MCF 10A (cell line): ENCODE measurements at regions of chr7 and their contacts with region 1.

Region 1: DNA sequence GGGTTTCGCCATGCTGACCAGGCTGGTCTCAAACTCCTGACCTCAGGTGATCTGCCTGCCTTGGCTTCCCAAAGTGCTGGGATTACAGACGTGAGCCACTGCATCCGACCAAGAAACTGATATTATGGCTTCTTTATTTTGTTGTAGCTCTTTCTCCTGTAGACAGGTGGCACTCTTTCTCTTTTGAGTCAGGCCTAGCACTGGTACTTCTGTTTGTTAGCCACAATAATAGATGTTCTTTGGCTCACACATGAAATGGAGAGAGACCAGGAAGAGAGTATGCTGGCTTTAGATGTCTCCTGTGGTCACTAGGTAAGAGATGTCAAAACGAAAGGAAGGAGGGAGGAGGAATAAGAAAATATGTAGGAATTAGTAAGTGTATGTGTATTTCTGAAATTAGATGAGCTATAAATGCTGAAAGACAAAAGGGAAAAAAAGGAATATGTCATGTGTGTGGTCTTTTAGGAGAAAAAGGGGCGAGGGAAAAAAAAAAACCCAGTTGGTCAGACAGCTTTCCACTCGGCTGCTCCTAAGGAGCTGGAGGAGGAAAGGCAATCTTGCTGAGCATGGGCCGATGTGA is 78.7 kb downstream of the CLEC2L start:
- DNase-seq: peak; percentile 36
- H3K4me3 Mint-ChIP-seq: no peak overlapping the region
- H3K27ac Mint-ChIP-seq: no peak overlapping the region
- H3K4me1 Mint-ChIP-seq: no peaks in the 10 kb centered on the region
- H3K27me3 Mint-ChIP-seq: no peaks in the 10 kb centered on the region
- CTCF ChIP-seq: peak; percentile 44

Region 2: GRCh38 chr7:139505563-139505962 is 96.7 kb before region 1 on chr7:
- CTCF ChIA-PET with region 1: interaction called, 13 read pairs
- POLR2A ChIA-PET with region 1: no interaction called
- intact Hi-C with region 1: no loop called
- DNase-seq: peak; percentile 39
- H3K4me3 Mint-ChIP-seq: no peak overlapping the region
- H3K27ac Mint-ChIP-seq: no peak overlapping the region
- H3K4me1 Mint-ChIP-seq: no peaks in the 10 kb centered on the region
- H3K27me3 Mint-ChIP-seq: no peaks in the 10 kb centered on the region
- CTCF ChIP-seq: no peak

Region 3: DNA sequence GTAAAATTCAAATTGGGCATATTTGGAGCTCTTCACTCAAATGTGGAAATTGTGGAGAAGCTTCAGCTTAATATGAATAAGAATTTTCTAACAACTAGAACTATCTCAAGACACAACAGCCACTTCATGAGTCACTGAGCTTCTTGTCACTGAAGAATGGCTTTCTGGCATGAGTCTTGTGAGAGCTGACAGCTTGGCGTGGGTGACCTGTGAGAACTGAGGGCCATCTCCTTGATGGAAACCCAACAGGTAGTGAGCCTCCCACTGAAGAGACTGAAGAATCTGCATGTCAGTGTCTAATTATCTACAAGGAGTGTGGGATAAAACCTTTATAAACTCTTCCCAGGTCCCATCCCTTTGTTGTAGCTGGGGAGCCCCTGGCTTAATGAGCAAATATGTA is 12.8 kb before region 1 on chr7:
- CTCF ChIA-PET with region 1: interaction called, 14 read pairs
- POLR2A ChIA-PET with region 1: no interaction called
- intact Hi-C with region 1: no loop called
- DNase-seq: no peak
- H3K4me3 Mint-ChIP-seq: no peak overlapping the region
- H3K27ac Mint-ChIP-seq: peak overlapping the region; percentile 46
- H3K4me1 Mint-ChIP-seq: peaks cover 6% of the 10 kb centered on the region
- H3K27me3 Mint-ChIP-seq: no peaks in the 10 kb centered on the region
- CTCF ChIP-seq: no peak

Region 4: GRCh38 chr7:139613971-139614411 is 11.8 kb after region 1 on chr7:
- CTCF ChIA-PET with region 1: interaction called, 15 read pairs
- POLR2A ChIA-PET with region 1: interaction called, 3 read pairs
- intact Hi-C with region 1: no loop called
- DNase-seq: no peak
- H3K4me3 Mint-ChIP-seq: no peak overlapping the region
- H3K27ac Mint-ChIP-seq: no peak overlapping the region
- H3K4me1 Mint-ChIP-seq: peaks cover 3% of the 10 kb centered on the region
- H3K27me3 Mint-ChIP-seq: no peaks in the 10 kb centered on the region
- CTCF ChIP-seq: no peak

Region 5: DNA sequence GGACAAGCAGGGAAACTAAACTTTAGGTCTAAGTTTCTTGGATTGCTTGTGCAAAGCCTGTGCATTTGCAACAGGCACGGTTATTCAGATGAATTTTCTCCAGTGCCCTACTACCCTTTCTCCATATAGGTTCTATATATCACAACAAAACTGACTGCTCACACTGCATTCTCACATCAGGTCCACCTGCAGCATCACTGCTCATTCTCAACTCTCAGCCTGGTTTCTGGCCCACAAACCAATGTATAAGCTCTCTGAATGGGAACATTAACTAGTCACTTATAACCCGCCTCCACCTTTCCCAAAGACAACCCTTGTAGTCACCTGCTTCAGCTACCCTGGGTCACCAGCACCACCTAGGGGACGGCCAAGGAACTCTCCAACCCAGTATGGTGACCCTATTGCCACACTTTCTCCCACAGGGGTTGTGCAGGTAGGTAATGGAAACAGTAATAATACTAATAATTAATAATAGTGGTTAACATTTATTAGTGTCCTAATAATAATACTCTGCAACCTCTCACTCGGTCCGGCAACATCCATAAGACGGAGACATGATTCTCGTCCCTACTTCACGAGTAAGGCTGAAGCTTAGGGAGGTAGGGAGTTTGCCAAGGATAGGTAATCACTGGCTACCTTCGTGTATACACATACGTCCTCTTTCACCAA is 18.6 kb after region 1 on chr7:
- CTCF ChIA-PET with region 1: interaction called, 15 read pairs
- POLR2A ChIA-PET with region 1: interaction called, 3 read pairs
- intact Hi-C with region 1: no loop called
- DNase-seq: peak; percentile 39
- H3K4me3 Mint-ChIP-seq: no peak overlapping the region
- H3K27ac Mint-ChIP-seq: no peak overlapping the region
- H3K4me1 Mint-ChIP-seq: peaks cover 10% of the 10 kb centered on the region
- H3K27me3 Mint-ChIP-seq: no peaks in the 10 kb centered on the region
- CTCF ChIP-seq: peak; percentile 73

Region 6: DNA sequence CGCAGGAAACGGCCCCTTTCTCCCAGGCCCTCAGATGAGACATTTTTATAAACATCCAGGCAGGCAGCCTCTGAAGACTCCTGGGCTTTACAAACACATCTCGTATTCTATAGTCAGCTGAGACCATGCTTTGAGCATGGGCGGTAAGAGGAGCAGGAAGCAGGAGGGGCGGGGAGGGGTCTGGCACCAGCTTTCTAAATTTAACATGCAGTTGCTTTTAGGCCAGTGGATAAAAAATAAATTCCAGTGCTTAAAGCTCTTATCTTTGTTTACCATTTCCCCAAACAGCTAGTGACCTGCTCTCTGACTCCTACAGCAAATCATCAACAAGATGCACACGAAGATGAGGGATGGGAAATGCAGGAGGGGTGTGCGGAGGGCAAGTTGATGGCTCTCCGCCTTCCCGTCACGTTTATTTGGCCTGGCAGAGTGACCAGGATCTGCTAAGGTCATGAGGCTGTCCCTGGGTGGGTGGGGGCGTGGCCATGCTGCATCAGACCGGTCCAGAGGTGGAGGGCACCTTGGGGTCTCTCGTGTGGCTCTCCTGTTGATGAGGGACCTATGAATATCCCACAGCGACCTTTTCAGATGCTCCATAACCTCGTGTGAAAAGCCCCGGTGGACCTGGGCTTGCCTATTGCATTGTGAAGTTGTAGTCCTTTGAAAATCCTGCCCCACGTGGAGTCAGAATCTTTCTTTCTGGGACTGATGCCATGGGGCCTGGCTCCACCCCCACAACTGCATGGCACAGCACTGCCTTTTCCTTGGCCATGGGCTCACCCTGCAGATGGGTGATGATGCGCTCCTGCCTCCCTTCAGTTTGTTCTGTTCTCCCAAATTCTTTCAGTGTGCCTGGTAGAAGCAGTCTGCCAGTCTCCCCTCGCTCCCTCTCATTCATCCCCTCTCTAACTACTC is 393.0 kb after region 1 on chr7:
- CTCF ChIA-PET with region 1: interaction called, 32 read pairs
- POLR2A ChIA-PET with region 1: no interaction called
- intact Hi-C with region 1: no loop called
- DNase-seq: peak; percentile 73
- H3K4me3 Mint-ChIP-seq: no peak overlapping the region
- H3K27ac Mint-ChIP-seq: no peak overlapping the region
- H3K4me1 Mint-ChIP-seq: peaks cover 12% of the 10 kb centered on the region
- H3K27me3 Mint-ChIP-seq: no peaks in the 10 kb centered on the region
- CTCF ChIP-seq: no peak

Region 7: GRCh38 chr7:140003913-140004382 is 401.7 kb after region 1 on chr7:
- CTCF ChIA-PET with region 1: interaction called, 32 read pairs
- POLR2A ChIA-PET with region 1: no interaction called
- intact Hi-C with region 1: loop called (anchors 1 kb)
- DNase-seq: peak; percentile 80
- H3K4me3 Mint-ChIP-seq: no peak overlapping the region
- H3K27ac Mint-ChIP-seq: no peak overlapping the region
- H3K4me1 Mint-ChIP-seq: no peaks in the 10 kb centered on the region
- H3K27me3 Mint-ChIP-seq: no peaks in the 10 kb centered on the region
- CTCF ChIP-seq: peak; percentile 56